OCI-LY7 (cell line): ENCODE measurements at regions of chr9 and their contacts with region 1.

Region 1: DNA sequence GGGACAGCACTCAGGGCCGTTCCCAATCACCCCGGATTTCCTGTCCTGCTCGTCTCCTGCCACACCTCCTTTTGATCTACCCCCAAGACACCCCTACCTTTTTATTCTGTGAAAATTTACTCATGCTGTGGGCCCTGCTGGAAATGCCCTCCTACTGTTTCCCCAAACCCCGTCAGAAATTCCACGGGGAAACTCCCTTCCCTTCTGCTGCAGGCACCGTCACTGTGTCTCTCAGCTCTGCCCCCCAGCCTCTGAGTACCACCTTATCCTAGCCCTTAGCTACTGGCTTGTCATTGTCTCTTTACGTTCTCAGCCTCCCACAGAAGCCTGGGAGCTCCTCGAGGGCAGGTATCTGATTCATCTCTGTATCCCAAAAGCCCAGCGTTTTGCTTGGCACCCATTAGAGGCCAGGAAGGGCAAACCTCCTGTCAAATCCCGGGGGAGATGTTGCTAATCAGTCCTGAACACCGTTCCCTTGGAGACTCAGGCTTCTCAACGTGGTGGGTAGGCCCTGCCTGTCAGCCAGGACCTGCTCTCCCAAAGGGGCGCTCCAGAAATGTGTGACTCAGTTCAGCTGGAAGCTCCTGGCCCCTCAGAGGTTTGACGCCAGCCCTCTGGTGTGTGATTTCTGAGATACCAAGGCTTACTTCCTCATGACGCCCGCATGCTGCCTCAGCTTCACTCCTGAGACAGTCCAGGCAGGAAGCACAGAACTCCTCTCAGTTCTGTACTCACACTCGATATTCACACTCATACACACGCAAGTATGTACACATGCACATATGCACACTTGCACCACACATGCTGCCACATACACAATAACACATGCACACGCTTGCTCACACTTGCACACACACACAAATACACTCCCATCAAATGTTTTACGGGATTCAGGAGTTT is 50.7 kb upstream of the GRHPR start:
- DNase-seq: peak; percentile 70
- H3K4me3 ChIP-seq: peak overlapping the region; percentile 37
- H3K27ac ChIP-seq: peak overlapping the region; percentile 99
- H3K4me1 ChIP-seq: peaks cover 86% of the 10 kb centered on the region
- CTCF ChIP-seq: no peak

Region 2: GRCh38 chr9:36928670-36929349 is 443.0 kb before region 1 on chr9:
- CTCF ChIA-PET with region 1: no interaction called
- POLR2A ChIA-PET with region 1: no interaction called
- intact Hi-C with region 1: no loop called
- DNase-seq: no peak
- H3K4me3 ChIP-seq: no peak overlapping the region
- H3K27ac ChIP-seq: no peak overlapping the region
- H3K4me1 ChIP-seq: no peaks in the 10 kb centered on the region
- CTCF ChIP-seq: no peak

Region 3: GRCh38 chr9:37079370-37080164 is 292.2 kb before region 1 on chr9:
- CTCF ChIA-PET with region 1: no interaction called
- POLR2A ChIA-PET with region 1: interaction called, 8 read pairs
- intact Hi-C with region 1: loop called (anchors 2 kb)
- DNase-seq: peak; percentile 97
- H3K4me3 ChIP-seq: peak overlapping the region; percentile 90
- H3K27ac ChIP-seq: peak overlapping the region; percentile 70
- H3K4me1 ChIP-seq: peaks cover 63% of the 10 kb centered on the region
- CTCF ChIP-seq: no peak

Region 4: GRCh38 chr9:37266630-37267029 is 105.2 kb before region 1 on chr9:
- CTCF ChIA-PET with region 1: no interaction called
- POLR2A ChIA-PET with region 1: no interaction called
- intact Hi-C with region 1: no loop called
- DNase-seq: no peak
- H3K4me3 ChIP-seq: no peak overlapping the region
- H3K27ac ChIP-seq: no peak overlapping the region
- H3K4me1 ChIP-seq: peaks cover 25% of the 10 kb centered on the region
- CTCF ChIP-seq: no peak

Region 5: GRCh38 chr9:37293664-37294524 is 77.9 kb before region 1 on chr9:
- CTCF ChIA-PET with region 1: no interaction called
- POLR2A ChIA-PET with region 1: interaction called, 40 read pairs
- intact Hi-C with region 1: loop called (anchors 2 kb)
- DNase-seq: peak; percentile 97
- H3K4me3 ChIP-seq: peak overlapping the region; percentile 46
- H3K27ac ChIP-seq: peak overlapping the region; percentile 99
- H3K4me1 ChIP-seq: peaks cover 100% of the 10 kb centered on the region
- CTCF ChIP-seq: no peak

Region 6: GRCh38 chr9:37329576-37329975 is 42.2 kb before region 1 on chr9:
- CTCF ChIA-PET with region 1: no interaction called
- POLR2A ChIA-PET with region 1: interaction called, 11 read pairs
- intact Hi-C with region 1: loop called (anchors 2 kb)
- DNase-seq: peak; percentile 88
- H3K4me3 ChIP-seq: peak overlapping the region; percentile 44
- H3K27ac ChIP-seq: peak overlapping the region; percentile 98
- H3K4me1 ChIP-seq: peaks cover 99% of the 10 kb centered on the region
- CTCF ChIP-seq: peak; percentile 96

Region 7: GRCh38 chr9:37398464-37399025 is 26.7 kb after region 1 on chr9:
- CTCF ChIA-PET with region 1: interaction called, 4 read pairs
- POLR2A ChIA-PET with region 1: interaction called, 298 read pairs
- intact Hi-C with region 1: no loop called
- DNase-seq: no peak
- H3K4me3 ChIP-seq: peak overlapping the region; percentile 37
- H3K27ac ChIP-seq: peak overlapping the region; percentile 97
- H3K4me1 ChIP-seq: peaks cover 91% of the 10 kb centered on the region
- CTCF ChIP-seq: no peak

Region 8: DNA sequence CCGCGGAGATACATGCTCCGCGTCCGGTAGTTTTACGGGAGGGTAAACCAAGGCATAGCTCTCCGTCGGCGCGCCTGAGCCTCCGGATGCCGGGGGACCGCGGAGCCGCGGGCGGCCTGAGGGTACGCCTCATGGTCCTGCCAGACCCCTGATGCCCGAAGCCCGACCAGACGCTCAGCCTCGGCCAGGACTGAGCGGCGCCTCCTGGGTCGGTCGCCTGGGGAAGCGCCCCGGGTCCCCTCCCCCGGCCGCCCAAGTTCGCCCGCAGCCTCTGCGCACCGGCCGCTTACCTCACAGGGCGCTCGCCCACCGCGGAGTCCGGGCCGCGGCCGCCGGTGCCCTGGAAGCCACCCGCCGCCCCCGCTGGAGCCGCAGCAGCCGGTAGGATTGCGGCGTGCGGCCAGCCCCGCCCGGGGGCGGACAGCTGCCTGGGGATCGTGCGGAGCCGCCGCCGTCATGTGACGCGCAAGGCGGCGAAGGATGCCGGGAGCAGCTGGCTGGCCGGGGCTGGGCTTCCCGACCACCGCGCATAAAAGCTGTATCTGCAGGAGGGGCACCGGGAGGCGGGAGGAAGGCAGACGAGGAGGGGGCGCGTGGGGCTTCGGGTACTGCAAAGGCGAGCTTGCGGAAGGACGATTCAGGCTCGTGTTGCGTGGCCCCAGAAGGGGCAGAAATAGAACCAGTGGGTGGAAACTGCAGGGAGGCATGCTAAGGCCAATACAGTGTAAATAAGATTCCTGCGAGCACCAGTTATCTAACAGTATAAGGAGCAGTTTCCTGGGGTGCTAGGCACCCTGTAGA is 204.3 kb after region 1 on chr9 and contains the start of gene FBXO10:
- CTCF ChIA-PET with region 1: no interaction called
- POLR2A ChIA-PET with region 1: interaction called, 10 read pairs
- intact Hi-C with region 1: no loop called
- DNase-seq: peak; percentile 73
- H3K4me3 ChIP-seq: peak within 1 kb of the TSS; percentile 78
- H3K27ac ChIP-seq: peak within 1 kb of the TSS; percentile 62
- H3K4me1 ChIP-seq: peaks cover 38% of the 10 kb centered on the region
- CTCF ChIP-seq: no peak
- total RNA-seq, gene FBXO10: 9.4 and 16.1 TPM in 2 replicates